ENCODE measurements at regions of chr10 and their contacts with region 1.

Region 1: GRCh38 chr10:61903221-61903927 is 1.9 kb downstream of the ARID5B start:
- DNase-seq: peak; percentile 63
- H3K4me3 ChIP-seq: peak overlapping the region; percentile 66 to 91 (median 85)
- H3K27ac ChIP-seq: peak overlapping the region; percentile 92
- H3K4me1 ChIP-seq: peaks cover 27% of the 10 kb centered on the region
- H3K27me3 ChIP-seq: no peaks in the 10 kb centered on the region
- CTCF ChIP-seq: peak in 1 of 2 donors; percentile 44

Region 2: DNA sequence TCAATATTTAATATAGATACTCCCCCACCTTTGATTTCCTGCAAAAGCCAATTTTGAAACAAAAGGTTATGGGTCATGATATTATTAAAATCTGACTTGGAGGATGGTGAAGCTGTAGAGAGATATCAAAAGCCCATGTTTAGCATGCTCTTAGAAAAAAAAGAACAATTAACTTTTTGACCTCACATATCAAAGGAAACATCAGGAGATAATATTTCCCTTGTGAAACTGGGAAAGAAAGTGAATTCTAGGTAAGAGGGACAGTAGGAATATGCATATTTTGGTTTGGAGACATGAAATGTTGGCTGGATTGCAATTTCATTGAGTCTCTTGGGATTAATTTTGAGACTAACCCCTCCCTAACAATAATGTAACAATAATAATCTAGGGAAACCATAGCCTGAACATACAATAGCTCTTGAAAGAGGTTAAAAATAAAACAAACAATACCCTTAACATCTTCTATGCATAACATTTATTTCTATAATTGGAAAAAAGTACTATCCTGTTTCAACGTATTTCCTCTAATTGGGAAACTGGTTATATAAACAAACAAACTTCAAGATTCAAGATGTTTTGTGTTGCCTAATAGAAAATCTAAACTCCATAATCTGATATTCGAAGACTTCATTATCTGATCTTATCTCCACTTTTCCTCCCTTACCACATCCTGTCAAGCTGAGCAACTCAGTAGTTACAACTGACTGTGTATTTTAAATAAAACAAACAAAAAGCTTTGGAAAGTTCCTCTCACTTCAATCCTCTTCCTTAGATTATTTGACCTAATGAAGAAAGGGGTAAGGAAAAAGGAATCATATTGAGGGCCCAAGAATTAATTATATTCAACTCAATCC is 465.0 kb before region 1 on chr10:
- CTCF ChIA-PET with region 1: no interaction called
- dilution Hi-C with region 1: no loop called
- in situ Hi-C with region 1: no loop called
- intact Hi-C with region 1: no loop called
- DNase-seq: peak; percentile 3
- H3K4me3 ChIP-seq: no peak overlapping the region
- H3K27ac ChIP-seq: no peak overlapping the region
- H3K4me1 ChIP-seq: no peaks in the 10 kb centered on the region
- H3K27me3 ChIP-seq: peaks cover 3% of the 10 kb centered on the region
- CTCF ChIP-seq: no peak

Region 3: DNA sequence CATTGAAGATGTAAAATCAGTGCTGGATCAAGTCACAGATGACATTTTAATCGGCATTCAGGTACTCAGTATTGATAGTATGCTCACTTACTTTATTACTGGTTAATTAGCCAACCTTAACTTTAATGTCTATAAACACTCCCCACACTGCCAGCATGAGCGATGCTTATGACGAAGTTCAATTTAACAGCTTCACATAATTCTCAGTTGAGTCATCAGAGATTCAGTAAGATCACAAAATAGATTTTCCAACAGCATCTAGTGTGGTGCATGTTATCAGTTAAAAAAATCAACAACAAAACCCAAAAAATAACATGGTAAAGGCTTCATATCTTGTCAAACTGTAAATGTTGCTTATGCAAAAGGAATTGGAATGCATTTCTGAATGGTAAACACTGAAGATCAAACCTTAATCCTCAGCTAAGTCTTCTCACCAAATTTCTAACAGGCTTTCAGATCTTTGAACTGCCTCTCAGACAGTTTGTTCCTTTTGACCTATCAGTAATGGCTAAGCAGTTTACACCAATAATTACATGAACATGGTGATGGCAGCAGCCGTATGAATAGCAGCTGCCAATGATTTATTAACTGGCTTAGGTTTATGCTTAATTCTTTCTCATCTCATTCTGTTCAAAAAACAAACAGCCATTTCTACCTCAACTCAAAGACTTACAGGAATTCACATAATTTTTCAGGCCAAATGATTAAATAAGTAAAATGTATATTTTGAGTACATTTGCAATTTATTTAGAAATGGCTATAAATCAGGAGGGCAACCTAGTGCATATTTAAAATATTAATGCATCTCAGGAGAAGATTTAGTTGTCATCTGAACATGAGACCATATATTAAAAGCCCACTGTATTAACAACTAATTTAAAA is 142.2 kb before region 1 on chr10:
- CTCF ChIA-PET with region 1: interaction called, 19 read pairs
- dilution Hi-C with region 1: no loop called
- in situ Hi-C with region 1: no loop called
- intact Hi-C with region 1: no loop called
- DNase-seq: peak; percentile 74
- H3K4me3 ChIP-seq: no peak overlapping the region
- H3K27ac ChIP-seq: peak overlapping the region; percentile 56
- H3K4me1 ChIP-seq: peaks cover 22% of the 10 kb centered on the region
- H3K27me3 ChIP-seq: no peaks in the 10 kb centered on the region
- CTCF ChIP-seq: no peak

Region 4: DNA sequence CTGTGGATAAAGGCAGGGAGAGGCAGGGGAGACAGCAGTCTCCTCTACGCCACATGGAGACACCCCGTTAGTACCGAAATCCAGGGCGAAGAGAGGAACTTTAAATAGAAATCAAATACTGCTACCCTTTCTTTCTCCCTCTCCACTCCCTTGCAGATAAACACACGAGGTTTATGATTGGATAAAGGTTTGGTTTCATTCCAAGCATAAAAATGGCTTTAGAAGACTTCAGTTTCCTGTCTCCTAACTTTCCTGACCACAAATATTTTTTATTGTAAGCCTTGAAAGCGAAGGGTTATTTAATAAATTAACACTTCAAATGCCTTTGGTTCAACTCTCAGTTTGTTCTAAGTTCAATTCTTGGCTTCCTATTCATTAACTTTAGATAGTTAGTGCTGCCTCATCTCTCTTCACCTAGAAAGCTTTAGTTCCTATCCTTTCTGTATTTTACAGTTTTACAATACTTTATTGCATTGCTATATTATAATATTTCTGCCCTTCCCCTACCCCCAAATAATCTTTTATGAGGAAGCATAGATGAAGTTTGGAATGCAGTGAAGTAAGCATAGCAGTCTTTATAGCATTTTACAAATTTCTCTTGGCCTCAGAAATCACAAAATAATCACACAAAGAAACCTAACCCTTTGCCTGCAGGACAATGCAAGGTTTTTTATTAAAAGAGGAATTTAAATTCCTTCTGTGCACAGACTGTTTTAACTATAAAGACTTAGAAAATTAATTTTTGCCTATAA is 33.4 kb before region 1 on chr10:
- CTCF ChIA-PET with region 1: no interaction called
- dilution Hi-C with region 1: no loop called
- in situ Hi-C with region 1: no loop called
- intact Hi-C with region 1: no loop called
- DNase-seq: no peak
- H3K4me3 ChIP-seq: no peak overlapping the region
- H3K27ac ChIP-seq: no peak overlapping the region
- H3K4me1 ChIP-seq: peaks cover 7% of the 10 kb centered on the region
- H3K27me3 ChIP-seq: no peaks in the 10 kb centered on the region
- CTCF ChIP-seq: no peak

Region 5: GRCh38 chr10:61882621-61883373 is 20.6 kb before region 1 on chr10:
- CTCF ChIA-PET with region 1: no interaction called
- dilution Hi-C with region 1: no loop called
- in situ Hi-C with region 1: no loop called
- intact Hi-C with region 1: no loop called
- DNase-seq: peak; percentile 81
- H3K4me3 ChIP-seq: no peak overlapping the region
- H3K27ac ChIP-seq: peak overlapping the region; percentile 74
- H3K4me1 ChIP-seq: peaks cover 10% of the 10 kb centered on the region
- H3K27me3 ChIP-seq: no peaks in the 10 kb centered on the region
- CTCF ChIP-seq: no peak

Region 6: DNA sequence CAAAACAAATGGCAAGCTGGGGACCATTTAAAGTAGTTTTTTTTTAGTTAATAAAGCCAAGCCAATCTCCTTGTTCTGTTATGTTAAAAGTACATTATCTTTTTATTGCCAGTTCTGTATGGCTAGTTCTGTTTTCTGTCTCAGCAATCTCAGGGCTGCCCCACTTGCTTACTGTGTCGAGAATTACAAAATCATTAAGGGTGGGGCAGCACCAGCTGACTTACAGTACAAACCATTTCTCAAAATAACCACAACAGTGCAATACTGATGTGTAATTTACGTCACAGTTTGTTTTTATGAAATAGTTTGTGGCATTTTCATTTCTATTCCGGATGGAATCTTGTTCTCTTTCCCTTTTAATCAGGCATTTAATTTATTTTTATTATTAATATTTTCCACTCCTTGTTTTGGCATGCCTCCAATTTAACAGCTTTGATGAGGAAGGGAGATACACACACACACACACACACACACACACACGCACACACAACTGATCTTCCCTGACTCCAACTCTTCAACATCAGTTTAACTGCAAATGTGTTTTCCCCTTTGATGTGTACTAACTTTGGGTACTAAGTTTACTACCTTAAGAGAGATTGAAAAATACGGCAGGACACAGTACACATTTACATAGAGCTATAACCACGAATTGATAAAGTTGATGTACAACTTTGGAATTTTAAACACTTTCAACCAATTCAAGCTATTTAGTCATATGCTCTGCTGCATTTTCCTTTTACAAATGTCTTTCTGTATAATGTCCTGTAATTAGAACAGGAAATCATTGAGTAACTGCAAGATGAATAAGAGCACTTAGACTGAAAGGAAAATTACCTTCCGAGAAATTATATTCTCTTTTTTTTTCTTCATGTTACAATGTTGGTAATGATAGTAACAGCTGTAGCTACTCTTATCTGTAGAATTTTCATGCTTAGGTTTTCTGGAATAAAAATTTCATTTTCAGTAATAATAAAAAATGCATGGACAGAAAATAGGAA is 89.6 kb after region 1 on chr10:
- CTCF ChIA-PET with region 1: no interaction called
- dilution Hi-C with region 1: no loop called
- in situ Hi-C with region 1: no loop called
- intact Hi-C with region 1: loop called (anchors 2 kb)
- DNase-seq: peak; percentile 90
- H3K4me3 ChIP-seq: peak overlapping the region; percentile 3 to 32 (median 24)
- H3K27ac ChIP-seq: peak overlapping the region; percentile 88
- H3K4me1 ChIP-seq: peaks cover 15% of the 10 kb centered on the region
- H3K27me3 ChIP-seq: no peaks in the 10 kb centered on the region
- CTCF ChIP-seq: no peak

Region 7: GRCh38 chr10:62082729-62083411 is 179.5 kb after region 1 on chr10:
- CTCF ChIA-PET with region 1: no interaction called
- dilution Hi-C with region 1: no loop called
- in situ Hi-C with region 1: no loop called
- intact Hi-C with region 1: loop called (anchors 2 kb)
- DNase-seq: peak; percentile 38
- H3K4me3 ChIP-seq: peak overlapping the region in 2 of 3 experiments; percentile 1 to 21
- H3K27ac ChIP-seq: peak overlapping the region; percentile 98
- H3K4me1 ChIP-seq: peaks cover 36% of the 10 kb centered on the region
- H3K27me3 ChIP-seq: no peaks in the 10 kb centered on the region
- CTCF ChIP-seq: no peak

Region 8: GRCh38 chr10:62384057-62384446 is 480.7 kb after region 1 on chr10:
- CTCF ChIA-PET with region 1: no interaction called
- dilution Hi-C with region 1: no loop called
- in situ Hi-C with region 1: no loop called
- intact Hi-C with region 1: loop called (anchors 5 kb)
- DNase-seq: peak; percentile 99
- H3K4me3 ChIP-seq: peak overlapping the region in 1 of 3 experiments; percentile 3
- H3K27ac ChIP-seq: peak overlapping the region; percentile 100
- H3K4me1 ChIP-seq: peaks cover 85% of the 10 kb centered on the region
- H3K27me3 ChIP-seq: no peaks in the 10 kb centered on the region
- CTCF ChIP-seq: no peak

Measured in mammary epithelial cell (primary cell).